Astrocyte of the cerebellum (primary cell): ENCODE measurements at regions of chr15 and their contacts with region 1.

Region 1: GRCh38 chr15:67254238-67255175 is at the starts of genes AAGAB and IQCH:
- DNase-seq: peak; percentile 89
- H3K4me3 ChIP-seq: peak within 1 kb of the TSS; percentile 81
- CTCF ChIP-seq: no peak

Region 2: GRCh38 chr15:67074886-67075229 is 179.6 kb before region 1 on chr15:
- in situ Hi-C with region 1: loop called (anchors 5 kb)
- DNase-seq: no peak
- H3K4me3 ChIP-seq: no peak overlapping the region
- CTCF ChIP-seq: no peak

Region 3: DNA sequence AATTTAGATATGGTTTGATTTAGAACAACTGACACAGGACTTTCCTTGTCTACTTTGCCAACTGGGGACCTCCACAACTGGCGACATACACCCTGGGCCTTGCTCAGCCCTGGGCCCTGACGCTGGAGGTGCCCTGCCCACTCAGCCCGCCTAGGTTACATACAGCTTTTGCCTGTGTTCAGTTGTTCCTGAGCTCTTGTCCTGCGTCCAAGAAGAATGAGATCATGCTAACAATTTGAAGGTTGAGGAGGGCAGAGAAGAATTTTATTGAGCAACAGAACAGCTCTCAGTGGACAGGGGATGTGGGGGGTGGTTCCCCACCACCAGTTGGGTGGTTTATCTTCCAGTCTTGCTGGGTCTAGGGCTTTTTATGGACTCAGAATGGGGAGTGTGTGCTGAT is 68.0 kb after region 1 on chr15:
- in situ Hi-C with region 1: no loop called
- DNase-seq: no peak
- H3K4me3 ChIP-seq: no peak overlapping the region
- CTCF ChIP-seq: no peak